ENCODE measurements at regions of chr2 and their contacts with region 1.

Region 1: GRCh38 chr2:237072067-237072931 is 13.4 kb upstream of the COPS8 start:
- DNase-seq: peak; percentile 75 to 76
- ATAC-seq: peak; percentile 63 to 85 (median 74)
- H3K4me3 ChIP-seq: no peak overlapping the region
- H3K27ac ChIP-seq: no peak overlapping the region
- H3K4me1 ChIP-seq: peaks cover 4% of the 10 kb centered on the region
- H3K27me3 ChIP-seq: no peaks in the 10 kb centered on the region
- CTCF ChIP-seq: peak; percentile 98

Region 2: GRCh38 chr2:235779444-235779896 is 1292.8 kb before region 1 on chr2:
- intact Hi-C with region 1: loop called in 1 of 2 experiments (anchors 10 kb)
- DNase-seq: peak; percentile 69 to 83
- ATAC-seq: peak; percentile 83 to 91 (median 88)
- H3K4me3 ChIP-seq: no peak overlapping the region
- H3K27ac ChIP-seq: no peak overlapping the region
- H3K4me1 ChIP-seq: no peaks in the 10 kb centered on the region
- H3K27me3 ChIP-seq: no peaks in the 10 kb centered on the region
- CTCF ChIP-seq: peak; percentile 78

Region 3: DNA sequence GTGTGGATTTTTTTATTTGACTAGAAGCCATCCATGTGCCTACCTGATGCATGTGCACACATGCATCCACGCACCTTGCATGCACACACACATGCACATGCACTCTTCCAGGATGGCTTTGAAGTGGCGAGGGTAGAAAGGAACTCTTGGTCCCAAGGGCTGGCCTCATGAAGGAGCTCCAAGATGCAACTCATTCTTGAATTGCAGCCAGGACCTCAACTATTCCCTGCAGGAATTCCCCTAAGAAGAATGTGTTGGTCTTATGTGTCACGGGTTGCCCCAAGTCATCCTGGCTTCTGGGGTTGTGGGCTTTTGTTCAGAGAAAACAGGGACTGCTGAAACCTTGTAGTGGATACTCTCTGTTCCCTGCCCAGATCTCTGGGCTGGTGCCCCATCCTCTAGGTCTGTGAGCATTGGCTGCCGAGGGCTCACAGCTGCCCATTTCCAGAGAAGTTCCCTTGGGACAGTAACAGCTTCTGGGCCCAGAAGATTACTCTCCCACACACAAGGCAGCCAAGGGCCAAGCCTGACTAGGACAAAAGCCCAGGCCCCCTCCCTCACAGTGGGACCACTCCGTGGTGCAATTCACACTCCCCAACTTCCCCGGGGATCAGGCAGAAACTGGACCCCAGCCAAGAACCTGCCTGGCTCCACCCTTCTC is 151.0 kb after region 1 on chr2:
- intact Hi-C with region 1: no loop called
- DNase-seq: peak; percentile 64 to 88
- ATAC-seq: peak; percentile 53 to 76 (median 74)
- H3K4me3 ChIP-seq: no peak overlapping the region
- H3K27ac ChIP-seq: peak overlapping the region; percentile 27
- H3K4me1 ChIP-seq: peaks cover 9% of the 10 kb centered on the region
- H3K27me3 ChIP-seq: no peaks in the 10 kb centered on the region
- CTCF ChIP-seq: no peak

Region 4: DNA sequence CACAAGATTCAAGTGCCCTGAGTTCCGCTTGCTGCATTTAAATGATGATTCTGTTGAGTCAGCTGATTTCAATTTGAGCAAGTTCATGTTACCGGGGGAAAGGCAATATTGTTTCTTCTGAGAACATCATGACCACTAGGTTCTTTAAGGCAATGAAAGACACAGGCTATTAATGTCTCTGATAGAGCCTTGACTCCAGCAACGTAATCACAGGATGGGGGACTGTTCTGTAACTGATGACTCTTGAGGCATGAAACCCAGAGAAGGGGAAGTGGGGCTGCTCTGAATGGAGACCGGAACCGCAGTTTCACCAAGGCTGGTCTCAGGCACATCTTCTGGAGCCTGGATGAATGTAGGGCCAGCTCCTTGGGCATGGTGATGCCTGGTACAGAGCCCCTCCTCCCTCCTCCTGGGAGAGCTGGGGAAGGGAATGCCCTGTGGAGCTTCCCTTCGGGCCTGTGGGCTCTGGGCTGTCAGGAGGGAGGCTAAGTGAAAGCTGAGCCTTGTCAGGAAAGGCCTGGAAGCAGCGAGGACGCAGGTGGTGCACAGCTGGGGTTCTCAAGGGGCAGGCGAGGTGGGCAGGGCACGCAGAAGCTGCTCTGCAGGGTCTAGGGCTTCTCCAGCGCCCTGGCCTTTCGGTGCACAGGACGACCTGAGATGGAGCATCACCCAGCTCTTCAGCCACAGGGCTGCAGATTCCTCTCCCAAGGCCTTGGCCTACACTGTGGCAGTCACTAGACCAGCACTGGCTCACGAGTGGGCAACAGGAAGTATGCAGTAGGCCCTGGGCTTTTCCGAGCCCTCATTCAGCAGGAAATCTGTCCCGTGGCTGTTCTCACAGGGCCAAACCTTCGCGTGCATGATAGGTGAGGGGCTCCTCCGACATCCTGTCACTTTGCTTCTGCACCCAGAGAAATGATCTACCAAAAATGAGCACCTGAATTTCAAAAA is 457.4 kb after region 1 on chr2:
- intact Hi-C with region 1: no loop called
- DNase-seq: no peak
- ATAC-seq: no peak
- H3K4me3 ChIP-seq: no peak overlapping the region
- H3K27ac ChIP-seq: no peak overlapping the region
- H3K4me1 ChIP-seq: no peaks in the 10 kb centered on the region
- H3K27me3 ChIP-seq: no peaks in the 10 kb centered on the region
- CTCF ChIP-seq: no peak